HCT116 (cell line): ENCODE measurements at regions of chr7 and their contacts with region 1.

Region 1: DNA sequence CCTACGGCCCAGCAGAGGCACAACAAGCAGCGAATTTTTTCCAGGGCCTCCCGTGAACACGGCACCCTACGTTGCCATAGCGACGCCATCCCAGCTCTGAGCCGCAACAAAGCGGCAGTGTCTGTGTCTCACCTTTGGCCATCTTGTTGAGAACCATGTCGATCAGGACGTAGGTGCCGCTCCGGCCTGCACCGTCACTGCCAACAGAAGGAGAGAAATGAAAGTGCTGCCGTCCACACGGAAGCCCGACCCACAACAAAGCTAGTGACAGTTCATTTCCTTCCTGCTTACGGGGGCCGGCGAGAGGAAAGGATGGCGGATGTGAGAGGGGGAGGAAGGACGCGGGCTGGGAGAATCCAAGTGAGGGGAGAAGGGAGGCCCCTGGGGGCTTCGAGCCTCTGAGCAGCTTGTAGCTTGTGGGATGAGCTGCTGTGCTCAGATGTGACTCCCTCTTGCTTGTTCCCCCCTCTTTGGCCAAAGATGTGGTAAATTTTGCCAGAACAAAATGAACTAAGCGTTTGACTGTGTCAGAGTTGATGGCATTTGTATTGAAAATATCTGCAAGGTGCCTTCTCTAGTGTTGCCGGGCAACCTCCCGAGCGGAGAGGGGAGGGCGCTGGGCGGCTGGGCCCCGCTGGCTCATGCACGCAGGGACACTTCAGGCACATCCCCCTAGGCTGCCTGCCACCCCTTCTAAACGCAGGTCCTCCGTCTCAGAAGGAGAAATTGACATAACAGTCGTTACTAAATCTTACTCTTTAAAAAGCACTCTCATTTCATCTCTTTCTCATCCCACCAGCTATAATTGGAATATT is 232.2 kb downstream of the DNAJB6 start:
- DNase-seq: no peak
- ATAC-seq: no peak
- H3K4me3 ChIP-seq: no peak overlapping the region
- H3K27ac ChIP-seq: no peak overlapping the region
- H3K4me1 ChIP-seq: peaks cover 18 to 26% of the 10 kb centered on the region in 2 experiments
- H3K27me3 ChIP-seq: no peaks in the 10 kb centered on the region
- CTCF ChIP-seq: no peak
- POLR2A ChIP-seq: no peak
- RAD21 ChIP-seq: no peak

Region 2: DNA sequence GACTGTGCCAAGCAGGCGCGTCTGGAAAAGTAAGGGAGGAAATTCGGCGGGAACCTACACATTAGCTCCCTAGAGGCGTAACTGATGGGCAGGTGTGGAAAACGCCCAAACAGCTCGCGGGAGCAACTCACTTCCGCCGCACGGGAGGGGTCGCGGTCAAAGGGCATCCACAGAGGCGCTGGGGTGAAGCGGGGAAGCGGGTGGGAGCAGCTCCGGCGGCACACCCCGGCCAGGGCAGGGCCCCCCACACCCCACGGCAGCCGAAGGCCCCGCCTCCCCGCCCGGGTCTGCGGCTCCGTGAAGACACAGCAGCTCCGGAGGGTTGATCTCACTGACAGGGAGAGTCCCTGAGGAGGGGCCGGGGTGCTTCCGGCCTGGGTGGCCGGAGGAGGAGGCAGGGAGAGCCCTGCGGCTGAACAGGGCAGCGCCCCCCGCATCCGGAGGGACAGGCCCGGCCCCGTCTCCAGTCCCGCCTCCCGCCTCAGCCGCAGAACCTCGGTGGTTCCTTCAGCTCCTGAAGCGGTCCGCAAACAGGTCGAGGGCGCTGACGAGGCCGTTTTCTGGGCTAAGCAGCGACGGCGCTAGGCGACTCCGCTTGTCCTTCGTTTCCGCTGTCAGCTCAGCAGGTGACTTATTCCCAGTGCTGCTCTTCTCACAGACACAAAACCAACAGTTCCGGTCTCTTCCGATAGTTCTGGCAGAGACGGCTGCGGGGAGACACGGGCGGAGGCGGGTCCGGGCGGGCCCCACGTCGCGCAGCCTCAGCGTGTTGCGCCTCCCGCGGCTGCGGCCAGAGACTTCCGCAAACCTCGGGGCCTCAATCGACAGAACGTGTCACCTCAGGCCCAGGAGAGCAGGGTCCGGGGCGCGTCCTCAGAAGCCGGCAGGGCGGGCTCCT is 43.9 kb after region 1 on chr7:
- CTCF ChIA-PET with region 1: no interaction called
- POLR2A ChIA-PET with region 1: no interaction called
- RAD21 ChIA-PET with region 1: no interaction called
- intact Hi-C with region 1: no loop called
- DNase-seq: no peak
- ATAC-seq: no peak
- H3K4me3 ChIP-seq: no peak overlapping the region
- H3K27ac ChIP-seq: no peak overlapping the region
- H3K4me1 ChIP-seq: no peaks in the 10 kb centered on the region
- H3K27me3 ChIP-seq: no peaks in the 10 kb centered on the region
- CTCF ChIP-seq: no peak
- POLR2A ChIP-seq: no peak
- RAD21 ChIP-seq: no peak

Region 3: GRCh38 chr7:157664871-157665633 is 96.1 kb after region 1 on chr7:
- CTCF ChIA-PET with region 1: no interaction called
- POLR2A ChIA-PET with region 1: no interaction called
- RAD21 ChIA-PET with region 1: no interaction called
- intact Hi-C with region 1: loop called (anchors 2 kb)
- DNase-seq: peak; percentile 63
- ATAC-seq: peak; percentile 87
- H3K4me3 ChIP-seq: peak overlapping the region in 1 of 2 experiments; percentile 22; a peak in 2 of 4 replicates
- H3K27ac ChIP-seq: peak overlapping the region; percentile 37
- H3K4me1 ChIP-seq: peaks cover 7 to 33% of the 10 kb centered on the region in 2 experiments
- H3K27me3 ChIP-seq: no peaks in the 10 kb centered on the region
- CTCF ChIP-seq: no peak
- POLR2A ChIP-seq: no peak
- RAD21 ChIP-seq: no peak

Region 4: GRCh38 chr7:157932498-157933218 is 363.7 kb after region 1 on chr7:
- CTCF ChIA-PET with region 1: no interaction called
- POLR2A ChIA-PET with region 1: no interaction called
- RAD21 ChIA-PET with region 1: no interaction called
- intact Hi-C with region 1: loop called (anchors 10 kb)
- DNase-seq: peak; percentile 90
- ATAC-seq: peak; percentile 65
- H3K4me3 ChIP-seq: no peak overlapping the region
- H3K27ac ChIP-seq: peak overlapping the region; percentile 61; the same call in 1 of the 2 replicates
- H3K4me1 ChIP-seq: peaks cover 0 to 4% of the 10 kb centered on the region in 2 experiments; a peak in 2 of 4 replicates
- H3K27me3 ChIP-seq: peaks cover 5% of the 10 kb centered on the region; the same call in 1 of the 2 replicates
- CTCF ChIP-seq: no peak
- POLR2A ChIP-seq: no peak
- RAD21 ChIP-seq: no peak